Cardiac septum (tissue), 1 donor: ENCODE measurements at regions of chrX and their contacts with region 1.

Region 1: DNA sequence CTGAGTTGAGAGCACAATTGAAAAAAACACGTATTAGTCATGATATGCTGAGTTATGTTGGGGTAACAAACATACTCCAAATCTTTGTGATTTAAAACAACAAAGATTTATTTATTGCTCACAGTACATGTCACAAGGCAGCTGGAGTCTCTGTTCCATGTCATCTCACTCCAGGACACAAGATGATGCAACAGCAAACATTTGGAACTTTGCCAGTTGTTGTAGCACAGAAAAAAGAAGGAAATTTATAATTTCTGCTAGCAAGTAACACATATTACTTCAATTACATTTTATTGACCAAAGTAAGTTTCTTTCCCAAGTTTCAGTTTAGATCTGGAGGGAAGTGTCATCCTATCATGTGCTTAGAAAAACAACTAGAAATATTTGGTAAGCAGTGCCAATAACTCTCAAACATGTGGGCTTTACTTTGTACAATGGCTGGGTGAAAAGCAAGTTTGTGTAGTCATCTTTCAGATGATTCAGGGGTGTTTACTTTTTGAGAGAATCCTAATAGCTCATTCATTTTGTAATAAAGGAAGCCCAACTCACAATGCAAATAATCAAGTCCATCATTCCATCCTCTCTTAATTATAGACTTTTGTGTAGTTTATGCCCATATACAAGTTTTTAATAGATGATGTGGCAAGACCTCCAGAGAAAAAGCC is 452.3 kb downstream of the ZIC3 start:
- DNase-seq: no peak

Region 2: DNA sequence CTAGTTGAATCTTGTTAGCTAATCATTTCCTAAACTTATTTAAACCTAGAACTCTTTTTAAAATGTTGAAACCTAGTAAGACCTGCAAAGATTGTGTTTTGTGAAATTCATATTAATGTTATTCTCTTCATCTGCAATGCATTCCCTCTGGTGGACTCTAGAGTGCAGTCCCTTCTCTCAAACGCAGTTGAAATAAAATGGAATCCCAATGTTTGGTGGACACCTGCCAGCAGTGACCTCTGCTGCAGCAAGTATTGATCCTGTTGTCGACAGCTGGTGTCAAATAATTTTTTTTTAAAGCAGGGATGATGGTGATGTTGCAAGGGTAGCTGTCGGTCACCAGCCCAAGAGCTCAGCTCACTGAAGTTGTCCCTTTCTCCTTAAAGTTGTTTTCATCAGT is 39.6 kb after region 1 on chrX:
- intact Hi-C with region 1: loop called (anchors 2 kb)
- DNase-seq: no peak